GM12878 (cell line): ENCODE measurements at regions of chr4 and their contacts with region 1.

Region 1: DNA sequence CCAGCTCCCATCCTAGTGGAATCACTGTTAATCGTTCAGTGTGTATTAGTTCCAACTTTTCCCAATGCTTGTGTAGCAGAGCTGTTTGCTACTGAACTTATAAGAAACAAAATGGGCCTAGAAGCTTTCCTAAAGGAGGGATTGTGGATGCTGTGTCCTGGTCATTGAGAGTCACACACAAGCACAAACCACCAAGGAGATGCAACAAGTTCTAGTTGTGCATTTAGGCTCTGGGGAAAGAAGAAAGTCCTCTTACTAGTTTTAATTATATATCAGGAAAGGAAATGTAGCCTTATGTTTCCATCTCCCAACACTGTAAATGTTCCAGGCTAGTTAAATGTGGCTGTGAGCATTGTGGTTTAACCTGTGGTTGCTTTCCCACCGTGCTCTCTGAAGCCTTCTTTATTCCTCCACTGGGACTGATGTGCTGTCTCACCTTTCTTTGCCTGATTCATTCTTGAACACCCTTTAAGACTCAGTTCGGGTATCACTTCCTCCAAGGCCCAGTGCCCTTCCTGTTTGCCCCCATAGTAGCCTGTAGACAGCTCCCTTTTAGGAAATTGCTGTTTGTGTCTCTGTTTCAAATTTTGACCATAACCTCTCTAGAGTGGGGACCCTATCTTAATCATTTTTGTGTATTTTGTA is 34.3 kb downstream of the ATP10D start:
- DNase-seq: peak; percentile 81
- ATAC-seq: peak; percentile 99
- H3K4me3 ChIP-seq: no peak overlapping the region; the same call in 1 of the 2 replicates
- H3K27ac ChIP-seq: peak overlapping the region; percentile 77
- H3K4me1 ChIP-seq: peaks cover 17% of the 10 kb centered on the region
- H3K27me3 ChIP-seq: no peaks in the 10 kb centered on the region
- CTCF ChIP-seq: no peak
- EP300 ChIP-seq: peak in 1 of 2 experiments; percentile 87; a peak in 2 of 4 replicates
- POLR2A ChIP-seq: no peak
- RAD21 ChIP-seq: no peak; the same call in 1 of the 2 replicates

Region 2: GRCh38 chr4:47463235-47463956 is 56.0 kb before region 1 on chr4 and contains the start of gene COMMD8:
- CTCF ChIA-PET with region 1: no interaction called
- POLR2A ChIA-PET with region 1: interaction called, 9 read pairs
- RAD21 ChIA-PET with region 1: interaction called, 8 read pairs
- SMC1A ChIA-PET with region 1: interaction called, 14 read pairs
- in situ Hi-C with region 1: no loop called
- intact Hi-C with region 1: no loop called
- DNase-seq: peak; percentile 91
- ATAC-seq: peak; percentile 87
- H3K4me3 ChIP-seq: peak within 1 kb of the TSS; percentile 92
- H3K27ac ChIP-seq: peak within 1 kb of the TSS; percentile 79
- H3K4me1 ChIP-seq: peaks cover 22% of the 10 kb centered on the region
- H3K27me3 ChIP-seq: no peaks in the 10 kb centered on the region
- CTCF ChIP-seq: peak; percentile 22 to 41 (median 34); a peak in 5 of 6 replicates
- EP300 ChIP-seq: peak in 1 of 2 experiments; percentile 25; a peak in 1 of 4 replicates
- POLR2A ChIP-seq: peak; percentile 96
- RAD21 ChIP-seq: peak; percentile 1; the same call in 1 of the 2 replicates
- polyA plus RNA-seq, gene COMMD8: 126 to 152 TPM

Region 3: DNA sequence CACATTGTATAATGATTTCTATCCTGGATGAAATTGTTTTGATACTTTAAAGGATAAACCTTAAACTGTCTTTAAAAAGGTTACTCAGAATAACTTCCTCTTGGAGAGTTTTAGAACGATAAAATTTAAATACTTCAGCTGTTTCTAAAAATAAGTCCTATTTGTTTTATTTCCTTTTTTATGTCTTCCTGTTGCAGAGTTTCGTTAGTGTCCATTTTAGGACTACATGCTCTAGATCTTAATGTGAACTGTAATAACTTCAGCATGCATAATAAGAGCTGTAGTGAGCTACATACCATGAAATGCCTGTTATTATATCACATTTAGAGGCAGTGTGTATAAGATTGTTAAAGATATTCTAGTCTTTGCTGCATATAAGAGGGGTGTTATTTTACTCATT is 19.7 kb before region 1 on chr4:
- CTCF ChIA-PET with region 1: interaction called, 3 read pairs
- POLR2A ChIA-PET with region 1: interaction called, 11 read pairs
- RAD21 ChIA-PET with region 1: interaction called, 34 read pairs
- SMC1A ChIA-PET with region 1: interaction called, 239 read pairs
- in situ Hi-C with region 1: no loop called
- intact Hi-C with region 1: no loop called
- DNase-seq: no peak
- ATAC-seq: peak; percentile 61
- H3K4me3 ChIP-seq: peak overlapping the region; percentile 26; the same call in 1 of the 2 replicates
- H3K27ac ChIP-seq: peak overlapping the region; percentile 80
- H3K4me1 ChIP-seq: peaks cover 25% of the 10 kb centered on the region
- H3K27me3 ChIP-seq: no peaks in the 10 kb centered on the region
- CTCF ChIP-seq: no peak
- EP300 ChIP-seq: no peak
- POLR2A ChIP-seq: no peak
- RAD21 ChIP-seq: no peak

Region 4: GRCh38 chr4:47531241-47531953 is 12.0 kb after region 1 on chr4:
- CTCF ChIA-PET with region 1: interaction called, 8 read pairs
- POLR2A ChIA-PET with region 1: interaction called, 7 read pairs
- RAD21 ChIA-PET with region 1: interaction called, 11 read pairs
- SMC1A ChIA-PET with region 1: interaction called, 72 read pairs
- in situ Hi-C with region 1: no loop called
- intact Hi-C with region 1: loop called (anchors 1 kb)
- DNase-seq: peak; percentile 86
- ATAC-seq: peak; percentile 95
- H3K4me3 ChIP-seq: no peak overlapping the region
- H3K27ac ChIP-seq: peak overlapping the region; percentile 43
- H3K4me1 ChIP-seq: peaks cover 13% of the 10 kb centered on the region
- H3K27me3 ChIP-seq: no peaks in the 10 kb centered on the region
- CTCF ChIP-seq: no peak
- EP300 ChIP-seq: peak; percentile 51 to 54; a peak in 2 of 4 replicates
- POLR2A ChIP-seq: no peak
- RAD21 ChIP-seq: no peak

Region 5: DNA sequence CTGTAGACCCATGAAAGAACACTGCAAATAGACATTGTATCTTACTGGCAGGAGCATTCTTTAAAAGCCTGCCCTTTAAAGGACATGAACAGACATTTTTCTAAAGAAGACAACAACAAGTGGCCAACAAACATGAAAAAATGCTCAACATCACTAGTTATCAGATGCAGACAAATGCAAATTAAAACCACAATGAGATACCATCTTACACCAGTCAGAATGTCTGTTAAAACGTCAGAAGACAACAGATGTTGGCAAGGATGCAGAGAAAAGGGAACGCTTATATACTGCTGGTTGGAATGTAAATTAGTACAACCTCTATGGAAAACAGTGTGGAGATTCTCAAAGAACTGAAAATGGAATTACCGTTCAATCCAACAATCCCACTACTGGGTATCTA is 42.9 kb after region 1 on chr4:
- CTCF ChIA-PET with region 1: interaction called, 18 read pairs
- POLR2A ChIA-PET with region 1: no interaction called
- RAD21 ChIA-PET with region 1: interaction called, 4 read pairs
- SMC1A ChIA-PET with region 1: interaction called, 10 read pairs
- in situ Hi-C with region 1: no loop called
- intact Hi-C with region 1: no loop called
- DNase-seq: no peak
- ATAC-seq: no peak
- H3K4me3 ChIP-seq: no peak overlapping the region
- H3K27ac ChIP-seq: no peak overlapping the region
- H3K4me1 ChIP-seq: peaks cover 5% of the 10 kb centered on the region; the same call in 1 of the 2 replicates
- H3K27me3 ChIP-seq: no peaks in the 10 kb centered on the region; a peak in 1 of 4 replicates
- CTCF ChIP-seq: no peak
- EP300 ChIP-seq: no peak
- POLR2A ChIP-seq: no peak
- RAD21 ChIP-seq: no peak